GM13976 (cell line): ENCODE measurements at regions of chr1 and their contacts with region 1.

Region 1: DNA sequence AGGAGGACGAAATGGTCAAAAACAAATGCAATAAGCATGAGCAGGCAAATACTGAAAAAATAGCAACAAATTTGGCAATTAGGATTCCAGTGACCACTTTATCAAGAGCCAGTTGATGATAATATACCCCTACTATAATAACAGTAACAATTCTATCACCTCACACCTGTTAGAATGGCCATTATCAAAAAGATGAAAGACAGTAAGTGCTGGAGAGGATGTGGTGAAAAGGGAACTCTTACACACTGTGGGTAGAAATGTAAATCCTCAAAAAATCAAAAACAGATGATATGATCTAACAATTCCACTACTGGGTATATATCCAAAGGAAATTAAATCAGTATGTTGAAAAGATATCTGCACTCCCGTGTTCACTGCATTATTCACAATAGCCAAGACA is 114.3 kb upstream of the GFI1 start:
- DNase-seq: no peak
- CTCF ChIP-seq: no peak

Region 2: DNA sequence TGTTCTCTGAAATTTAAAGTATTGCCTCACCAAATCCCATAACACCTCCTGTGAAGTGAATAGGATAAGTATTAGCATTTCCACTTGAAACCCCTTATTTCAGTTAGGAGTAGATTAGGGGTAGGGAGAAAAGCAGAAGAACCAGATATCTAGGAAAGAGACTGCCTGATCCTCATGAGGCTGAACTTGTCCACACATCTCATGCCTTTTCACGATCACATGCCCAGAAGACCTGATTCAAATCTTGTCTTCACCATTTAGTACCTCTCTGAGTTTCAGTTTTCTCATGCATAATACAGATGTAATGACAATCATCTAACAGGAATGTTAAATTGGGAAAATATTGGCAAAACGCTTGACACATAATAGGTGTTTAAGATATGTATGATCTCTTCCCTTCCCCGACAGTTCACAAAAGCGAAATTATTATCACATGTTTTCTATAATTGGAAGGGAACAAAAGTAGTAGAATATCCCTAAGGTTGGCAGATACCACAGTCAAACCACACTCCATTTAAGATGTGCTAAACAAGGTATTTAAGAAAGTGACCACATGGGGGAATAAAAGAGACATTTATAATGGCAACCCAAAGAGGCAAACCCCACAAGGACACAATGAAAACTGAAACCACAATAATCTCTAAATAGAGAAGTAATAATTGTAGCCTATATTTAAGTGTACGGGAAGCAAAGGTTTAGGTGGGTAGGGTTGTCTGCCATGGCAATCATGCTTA is 139.5 kb before region 1 on chr1:
- in situ Hi-C with region 1: loop called (anchors 10 kb)
- DNase-seq: peak; percentile 54
- CTCF ChIP-seq: no peak

Region 3: GRCh38 chr1:92792340-92792782 is 191.3 kb after region 1 on chr1:
- in situ Hi-C with region 1: no loop called
- DNase-seq: no peak
- CTCF ChIP-seq: no peak